Transverse colon (tissue), 4 donors: ENCODE measurements at regions of chr14 and their contacts with region 1.

Region 1: DNA sequence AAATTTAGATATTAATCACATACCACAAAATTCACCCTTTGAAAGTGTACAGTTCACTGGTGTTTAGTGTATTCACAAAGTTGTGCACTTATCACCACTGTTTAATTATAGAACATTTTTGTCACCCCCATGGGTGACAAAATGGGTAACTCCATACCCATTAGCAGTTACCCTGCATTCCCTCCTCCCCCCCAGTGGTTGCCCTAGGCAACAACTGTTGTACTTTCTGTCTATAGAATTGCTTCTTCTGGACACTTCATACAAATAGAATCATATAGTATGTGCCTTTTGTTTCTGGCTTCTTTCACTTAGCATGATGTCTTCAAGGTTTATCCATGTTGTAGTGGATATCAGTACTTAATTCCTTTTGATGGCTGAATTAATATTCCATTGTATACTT is 52.7 kb downstream of the FBXO34 start:
- DNase-seq: no peak
- H3K4me3 ChIP-seq: no peak overlapping the region
- H3K27ac ChIP-seq: no peak overlapping the region
- H3K4me1 ChIP-seq: peaks cover 2 to 25% (median 6%) of the 10 kb centered on the region in 4 donors
- H3K27me3 ChIP-seq: no peaks in the 10 kb centered on the region
- CTCF ChIP-seq: no peak
- EP300 ChIP-seq: no peak
- POLR2A ChIP-seq: no peak

Region 2: GRCh38 chr14:54967496-54967895 is 356.4 kb before region 1 on chr14:
- in situ Hi-C with region 1: no loop called
- intact Hi-C with region 1: loop called (anchors 5 kb)
- DNase-seq: no peak
- H3K4me3 ChIP-seq: no peak overlapping the region
- H3K27ac ChIP-seq: no peak overlapping the region
- H3K4me1 ChIP-seq: no peaks in the 10 kb centered on the region
- H3K27me3 ChIP-seq: no peaks in the 10 kb centered on the region
- CTCF ChIP-seq: no peak
- EP300 ChIP-seq: no peak
- POLR2A ChIP-seq: no peak

Region 3: GRCh38 chr14:55599200-55599879 is 275.4 kb after region 1 on chr14:
- in situ Hi-C with region 1: no loop called
- intact Hi-C with region 1: no loop called
- DNase-seq: peak; percentile 81
- H3K4me3 ChIP-seq: peak overlapping the region in 2 of 4 donors; percentile 6 to 39
- H3K27ac ChIP-seq: peak overlapping the region in 3 of 4 donors; percentile 39 to 56 (median 50)
- H3K4me1 ChIP-seq: peaks cover 0 to 63% (median 22%) of the 10 kb centered on the region in 4 donors
- H3K27me3 ChIP-seq: no peaks in the 10 kb centered on the region
- CTCF ChIP-seq: no peak
- EP300 ChIP-seq: no peak
- POLR2A ChIP-seq: no peak